Lower leg skin (tissue), 4 donors: ENCODE measurements at regions of chr18 and their contacts with region 1.

Region 1: GRCh38 chr18:36284671-36285295 is 12.7 kb upstream of the FHOD3 start:
- DNase-seq: peak in 1 of 2 donors; percentile 60
- H3K4me3 ChIP-seq: no peak overlapping the region
- CTCF ChIP-seq: no peak
- POLR2A ChIP-seq: no peak

Region 2: GRCh38 chr18:35756506-35757117 is 528.2 kb before region 1 on chr18:
- intact Hi-C with region 1: loop called (anchors 10 kb)
- DNase-seq: peak; percentile 42 to 84
- H3K4me3 ChIP-seq: no peak overlapping the region
- CTCF ChIP-seq: no peak
- POLR2A ChIP-seq: no peak

Region 3: GRCh38 chr18:36015629-36016028 is 269.2 kb before region 1 on chr18:
- intact Hi-C with region 1: loop called (anchors 10 kb)
- DNase-seq: no peak
- H3K4me3 ChIP-seq: no peak overlapping the region
- CTCF ChIP-seq: no peak
- POLR2A ChIP-seq: no peak

Region 4: DNA sequence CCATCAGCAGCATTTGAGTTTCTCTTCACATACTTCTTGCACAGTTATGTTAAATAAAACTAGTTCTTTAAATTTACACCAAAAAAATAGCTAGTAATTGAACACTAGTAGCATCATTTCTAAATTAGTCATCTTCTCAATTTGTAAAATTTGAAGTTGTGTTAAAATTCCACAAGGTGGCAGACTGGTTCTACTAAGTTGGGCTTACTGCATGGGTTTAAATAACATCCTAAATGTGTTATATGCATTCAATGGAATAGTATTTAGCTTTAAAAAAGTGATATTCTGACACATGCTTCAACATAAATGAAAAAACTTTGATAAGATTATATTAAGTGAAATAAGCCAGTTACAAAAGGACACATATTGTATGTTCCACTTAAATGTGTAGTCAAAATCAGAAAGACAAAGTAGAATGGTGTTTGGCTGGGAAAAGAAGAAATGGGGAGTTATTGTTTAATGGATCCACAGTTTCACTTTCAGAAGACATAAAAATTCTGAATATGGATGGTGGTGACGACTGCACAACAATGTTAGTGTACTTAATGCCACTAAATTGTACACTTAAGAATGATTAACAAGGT is 188.8 kb before region 1 on chr18:
- intact Hi-C with region 1: loop called (anchors 5 kb)
- DNase-seq: no peak
- H3K4me3 ChIP-seq: no peak overlapping the region
- CTCF ChIP-seq: no peak
- POLR2A ChIP-seq: no peak

Region 5: DNA sequence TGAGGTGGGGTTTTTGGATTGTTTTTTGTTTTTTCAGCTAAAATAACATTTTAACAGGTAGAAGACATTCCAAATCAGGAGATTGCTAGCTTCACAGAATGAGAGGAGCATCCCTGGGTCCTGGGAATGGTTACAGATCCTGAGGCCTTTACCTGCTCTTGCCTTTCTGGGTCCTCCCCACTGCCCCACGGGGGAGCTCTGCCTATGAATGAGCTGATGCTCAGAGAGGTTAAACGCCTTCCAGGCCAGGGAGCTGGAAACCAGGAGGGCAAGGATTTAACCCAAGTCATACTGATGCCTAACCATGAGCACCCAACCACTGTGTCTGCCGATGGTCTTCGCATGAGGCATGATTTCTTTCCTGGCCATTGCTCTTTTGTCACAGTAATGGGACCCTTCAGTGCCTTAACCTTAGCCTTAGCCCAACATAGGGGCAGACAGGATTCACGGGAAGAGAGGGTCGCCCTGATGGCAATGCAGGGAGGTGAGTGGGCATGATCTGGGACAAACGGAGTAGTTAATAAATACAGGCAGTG is 81.4 kb before region 1 on chr18:
- intact Hi-C with region 1: no loop called
- DNase-seq: peak in 1 of 2 donors; percentile 36
- H3K4me3 ChIP-seq: no peak overlapping the region
- CTCF ChIP-seq: no peak
- POLR2A ChIP-seq: no peak